ENCODE measurements at regions of chr2 and their contacts with region 1.

Region 1: GRCh38 chr2:239824046-239824694 is 201.0 kb downstream of the NDUFA10 start:
- DNase-seq: peak; percentile 85
- ATAC-seq: peak; percentile 94
- H3K4me3 ChIP-seq: no peak overlapping the region
- H3K27ac ChIP-seq: no peak overlapping the region
- H3K4me1 ChIP-seq: peaks cover 15 to 18% of the 10 kb centered on the region in 2 experiments; a peak in 3 of 4 replicates
- H3K27me3 ChIP-seq: peaks cover 26% of the 10 kb centered on the region; the same call in 1 of the 2 replicates
- CTCF ChIP-seq: peak; percentile 65 to 79 (median 74); a peak in 5 of 6 replicates
- POLR2A ChIP-seq: no peak
- RAD21 ChIP-seq: peak; percentile 85

Region 2: GRCh38 chr2:239716536-239717318 is 107.4 kb before region 1 on chr2:
- CTCF ChIA-PET with region 1: no interaction called
- POLR2A ChIA-PET with region 1: no interaction called
- RAD21 ChIA-PET with region 1: no interaction called
- intact Hi-C with region 1: no loop called
- DNase-seq: no peak
- ATAC-seq: no peak
- H3K4me3 ChIP-seq: no peak overlapping the region
- H3K27ac ChIP-seq: no peak overlapping the region
- H3K4me1 ChIP-seq: no peaks in the 10 kb centered on the region
- H3K27me3 ChIP-seq: no peaks in the 10 kb centered on the region
- CTCF ChIP-seq: no peak
- POLR2A ChIP-seq: no peak
- RAD21 ChIP-seq: no peak

Region 3: GRCh38 chr2:239882331-239882732 is 58.2 kb after region 1 on chr2:
- CTCF ChIA-PET with region 1: interaction called, 14 read pairs
- POLR2A ChIA-PET with region 1: no interaction called
- RAD21 ChIA-PET with region 1: no interaction called
- intact Hi-C with region 1: loop called (anchors 1 kb)
- DNase-seq: peak; percentile 55
- ATAC-seq: peak; percentile 97
- H3K4me3 ChIP-seq: no peak overlapping the region
- H3K27ac ChIP-seq: no peak overlapping the region
- H3K4me1 ChIP-seq: no peaks in the 10 kb centered on the region
- H3K27me3 ChIP-seq: no peaks in the 10 kb centered on the region
- CTCF ChIP-seq: peak; percentile 57 to 77 (median 72); a peak in 5 of 6 replicates
- POLR2A ChIP-seq: no peak
- RAD21 ChIP-seq: peak; percentile 77

Region 4: DNA sequence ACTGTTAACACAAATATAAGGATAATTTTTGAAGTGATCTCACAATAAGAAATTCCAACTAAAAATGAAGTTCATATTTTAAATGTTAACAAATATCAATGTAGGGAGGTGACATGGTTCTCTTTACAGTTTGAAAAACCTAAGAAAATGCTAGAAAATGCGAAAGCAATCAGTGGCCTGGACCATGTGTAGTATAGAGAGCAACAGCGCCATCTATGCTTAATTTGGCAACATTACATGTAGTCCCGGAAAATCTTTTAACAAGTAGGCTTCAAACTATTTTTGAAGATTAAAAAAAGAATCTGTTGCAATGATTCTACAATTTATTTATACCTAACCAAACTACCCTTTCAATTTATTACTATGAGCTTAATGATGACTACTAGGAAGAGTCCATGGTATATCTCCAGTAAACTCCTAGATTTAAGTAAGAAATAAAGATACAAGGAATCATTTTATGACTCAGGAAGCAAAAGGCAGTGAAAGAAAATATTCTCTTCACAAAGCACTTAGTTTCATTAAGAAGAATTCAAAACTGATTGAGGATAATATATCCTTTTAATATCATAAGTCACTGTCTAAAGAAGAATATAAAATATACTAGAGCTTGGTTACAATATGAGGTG is 167.6 kb after region 1 on chr2:
- CTCF ChIA-PET with region 1: interaction called, 8 read pairs
- POLR2A ChIA-PET with region 1: no interaction called
- RAD21 ChIA-PET with region 1: no interaction called
- intact Hi-C with region 1: loop called (anchors 1 kb)
- DNase-seq: peak; percentile 27
- ATAC-seq: peak; percentile 70
- H3K4me3 ChIP-seq: no peak overlapping the region
- H3K27ac ChIP-seq: no peak overlapping the region
- H3K4me1 ChIP-seq: no peaks in the 10 kb centered on the region
- H3K27me3 ChIP-seq: no peaks in the 10 kb centered on the region
- CTCF ChIP-seq: peak; percentile 62 to 89 (median 72); a peak in 5 of 6 replicates
- POLR2A ChIP-seq: no peak
- RAD21 ChIP-seq: peak; percentile 76

Region 5: DNA sequence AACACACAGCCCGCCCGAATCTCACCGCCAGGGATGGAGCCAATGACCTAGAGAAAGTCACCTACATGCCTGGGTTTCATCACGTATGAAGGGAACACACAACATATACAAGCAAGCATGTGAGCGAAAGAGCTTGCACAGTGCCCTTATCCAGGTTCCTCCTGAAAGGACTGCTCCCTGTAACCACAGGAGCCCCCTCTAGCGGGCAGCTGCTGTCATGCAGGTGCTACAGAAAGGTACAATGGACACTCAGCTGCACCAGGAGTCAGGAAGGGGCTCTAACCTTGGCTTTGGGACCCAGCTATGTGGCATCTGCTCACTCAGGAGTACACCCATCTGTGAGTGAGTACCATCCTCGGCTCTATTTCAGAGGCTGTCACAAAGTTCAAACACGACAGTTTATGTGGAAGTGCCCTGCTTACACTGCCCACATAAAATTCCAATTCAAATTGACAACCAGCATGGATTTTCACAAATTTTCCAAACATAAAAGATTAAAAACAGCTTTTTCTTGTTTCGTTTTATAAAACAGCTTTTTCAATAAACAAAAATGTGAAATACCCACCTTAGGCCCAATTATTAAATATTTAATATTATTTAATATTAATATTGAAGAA is 197.4 kb after region 1 on chr2:
- CTCF ChIA-PET with region 1: interaction called, 11 read pairs
- POLR2A ChIA-PET with region 1: no interaction called
- RAD21 ChIA-PET with region 1: no interaction called
- intact Hi-C with region 1: no loop called
- DNase-seq: peak; percentile 28
- ATAC-seq: peak; percentile 68
- H3K4me3 ChIP-seq: no peak overlapping the region
- H3K27ac ChIP-seq: no peak overlapping the region
- H3K4me1 ChIP-seq: peaks cover 11 to 14% of the 10 kb centered on the region in 2 experiments
- H3K27me3 ChIP-seq: no peaks in the 10 kb centered on the region
- CTCF ChIP-seq: peak; percentile 37 to 95 (median 89); a peak in 5 of 6 replicates
- POLR2A ChIP-seq: no peak
- RAD21 ChIP-seq: peak; percentile 28; the same call in 1 of the 2 replicates

Region 6: GRCh38 chr2:240143801-240144648 is 319.9 kb after region 1 on chr2:
- CTCF ChIA-PET with region 1: interaction called, 4 read pairs
- POLR2A ChIA-PET with region 1: no interaction called
- RAD21 ChIA-PET with region 1: no interaction called
- intact Hi-C with region 1: loop called (anchors 2 kb)
- DNase-seq: peak; percentile 16
- ATAC-seq: peak; percentile 97
- H3K4me3 ChIP-seq: no peak overlapping the region
- H3K27ac ChIP-seq: no peak overlapping the region
- H3K4me1 ChIP-seq: peaks cover 0 to 8% of the 10 kb centered on the region in 2 experiments; a peak in 1 of 4 replicates
- H3K27me3 ChIP-seq: no peaks in the 10 kb centered on the region
- CTCF ChIP-seq: peak; percentile 79 to 88 (median 88)
- POLR2A ChIP-seq: no peak
- RAD21 ChIP-seq: peak; percentile 98

Measured in HCT116 (cell line).